CD4-positive, alpha-beta T cell (primary cell): ENCODE measurements at regions of chr2 and their contacts with region 1.

Region 1: GRCh38 chr2:67423489-67423888 is 26.4 kb downstream of the ETAA1 start:
- DNase-seq: no peak
- ATAC-seq: no peak
- H3K4me3 ChIP-seq: no peak overlapping the region
- H3K4me3 Mint-ChIP-seq: no peak overlapping the region
- H3K27ac ChIP-seq: no peak overlapping the region
- H3K27ac Mint-ChIP-seq: no peak overlapping the region
- H3K4me1 ChIP-seq: no peaks in the 10 kb centered on the region
- H3K4me1 Mint-ChIP-seq: no peaks in the 10 kb centered on the region
- H3K27me3 ChIP-seq: no peaks in the 10 kb centered on the region
- H3K27me3 Mint-ChIP-seq: peaks cover 5% of the 10 kb centered on the region
- CTCF ChIP-seq: no peak

Region 2: DNA sequence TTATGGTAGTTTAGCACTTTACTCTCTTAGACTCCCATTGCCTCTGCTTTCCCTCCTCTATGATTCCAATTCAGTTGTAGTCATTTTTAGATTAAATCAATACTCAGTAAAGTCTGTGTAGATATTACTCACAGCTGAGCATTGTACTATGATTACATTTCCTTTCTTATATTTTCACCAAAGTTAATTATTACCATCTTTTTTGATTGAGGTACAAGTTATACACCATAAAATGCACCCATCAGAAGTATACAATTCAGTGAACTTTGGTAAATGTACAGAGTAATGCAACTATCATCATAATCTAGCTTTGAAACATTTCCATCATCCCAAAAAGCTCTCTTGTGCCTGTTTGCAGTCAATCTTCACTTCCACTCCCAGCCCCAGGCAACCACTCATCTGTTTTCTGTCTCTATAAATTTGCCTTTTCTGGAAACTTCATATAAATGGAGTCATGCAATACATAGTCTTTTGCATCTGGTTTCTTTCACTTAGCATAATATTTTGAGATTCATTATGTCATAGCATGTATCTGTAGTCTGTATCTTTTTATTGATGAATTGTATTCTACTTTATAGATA is 56.6 kb before region 1 on chr2:
- CTCF ChIA-PET with region 1: no interaction called
- POLR2A ChIA-PET with region 1: no interaction called
- intact Hi-C with region 1: loop called in 1 of 2 experiments (anchors 5 kb)
- DNase-seq: no peak
- ATAC-seq: no peak
- H3K4me3 ChIP-seq: no peak overlapping the region
- H3K4me3 Mint-ChIP-seq: no peak overlapping the region
- H3K27ac ChIP-seq: no peak overlapping the region
- H3K27ac Mint-ChIP-seq: no peak overlapping the region
- H3K4me1 ChIP-seq: no peaks in the 10 kb centered on the region
- H3K4me1 Mint-ChIP-seq: no peaks in the 10 kb centered on the region
- H3K27me3 ChIP-seq: peaks cover 0 to 3% of the 10 kb centered on the region in 2 experiments
- H3K27me3 Mint-ChIP-seq: peaks cover 26% of the 10 kb centered on the region
- CTCF ChIP-seq: no peak